Activated CD4-positive, alpha-beta T cell treated with anti-CD3 and anti-CD28 coated beads, Interleukin-2, amount 10 ng/mL, durations not matched to agents 24 days and 14 days (primary cell): ENCODE measurements at regions of chr5 and their contacts with region 1.

Region 1: DNA sequence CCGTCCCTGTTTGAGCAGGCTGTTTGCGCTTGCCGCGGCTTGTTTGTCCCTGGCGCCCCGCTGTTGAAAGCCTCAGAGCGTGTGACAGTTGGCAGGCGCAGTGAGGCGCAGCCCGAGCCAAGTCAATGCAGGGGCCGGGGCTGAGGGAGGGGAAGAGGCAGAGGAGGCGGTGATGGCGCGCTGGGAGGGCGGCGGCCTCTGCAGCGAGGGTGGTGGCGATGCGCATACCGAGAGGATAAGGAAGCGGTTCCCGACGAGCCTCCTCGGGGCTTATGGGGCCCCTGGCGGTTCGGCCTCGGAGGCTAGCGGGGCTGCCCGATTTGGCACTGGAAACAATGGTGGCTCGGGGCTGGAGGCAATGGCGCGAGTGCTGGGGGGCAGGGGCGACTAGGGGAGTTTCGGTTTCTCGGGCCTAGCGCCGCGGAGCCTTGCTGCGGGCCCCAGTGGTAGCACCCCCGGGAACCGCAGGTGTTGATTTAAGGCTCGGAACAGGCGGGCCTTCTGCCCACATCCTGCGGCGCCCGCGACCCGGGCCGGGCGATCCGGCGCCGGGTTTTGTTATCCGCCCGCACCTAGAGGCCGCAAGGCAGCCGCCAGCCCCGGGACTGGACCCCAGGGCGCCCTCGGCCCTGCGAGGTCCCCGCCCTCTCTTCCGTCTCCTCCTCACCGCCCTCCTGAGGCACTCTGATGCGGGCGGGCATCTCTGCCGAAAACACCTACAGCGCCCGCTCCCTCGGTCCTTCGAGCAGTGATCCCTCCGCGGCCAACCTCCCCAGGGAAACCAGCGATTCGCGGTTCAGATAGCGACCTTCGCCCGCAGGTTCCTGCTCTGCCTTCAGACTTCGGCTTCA is 947 bp upstream of the LNPEP start:
- DNase-seq: peak; percentile 99
- H3K4me3 Mint-ChIP-seq: peak overlapping the region; percentile 81
- H3K27ac Mint-ChIP-seq: peak overlapping the region; percentile 94
- H3K4me1 Mint-ChIP-seq: peaks cover 54% of the 10 kb centered on the region
- H3K27me3 Mint-ChIP-seq: no peaks in the 10 kb centered on the region

Region 2: DNA sequence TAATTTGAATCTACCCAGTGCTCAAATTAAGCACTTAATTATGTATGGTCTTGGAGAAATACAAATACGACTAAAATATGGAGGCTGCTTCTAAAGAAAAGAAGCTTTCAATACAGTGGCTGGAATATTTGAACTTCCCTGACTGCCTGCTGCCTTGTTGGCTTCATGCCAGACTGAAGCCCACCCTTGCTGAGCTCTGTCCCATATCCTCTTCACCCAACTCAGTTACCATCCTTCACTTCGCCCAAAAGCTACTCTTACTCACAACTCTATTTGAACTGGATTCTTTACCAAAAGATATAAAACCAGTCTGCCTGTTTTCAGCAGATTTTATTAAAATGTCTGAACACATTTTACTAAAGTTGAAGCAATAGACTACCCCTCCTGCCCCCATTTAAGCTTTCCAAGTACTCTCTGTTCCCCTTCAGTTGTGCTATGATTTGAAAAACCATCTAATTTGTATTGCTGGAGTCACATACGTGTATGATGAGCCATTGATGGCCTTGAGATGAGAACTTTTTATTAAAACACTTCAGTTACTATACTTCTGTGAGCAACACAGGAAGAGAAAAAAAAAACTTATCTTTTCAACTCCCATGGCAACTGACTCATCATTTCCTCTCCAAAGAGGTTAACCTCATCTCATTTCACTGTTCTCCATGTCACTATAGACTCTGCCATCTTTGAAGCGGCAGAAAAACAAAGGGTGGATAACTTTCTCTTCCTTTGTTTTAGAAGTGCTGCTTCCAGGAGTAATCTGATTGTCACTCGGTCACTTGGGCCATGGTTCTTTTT is 397.7 kb before region 1 on chr5:
- intact Hi-C with region 1: loop called (anchors 10 kb)
- DNase-seq: peak; percentile 83
- H3K4me3 Mint-ChIP-seq: peak overlapping the region; percentile 56
- H3K27ac Mint-ChIP-seq: peak overlapping the region; percentile 85
- H3K4me1 Mint-ChIP-seq: peaks cover 27% of the 10 kb centered on the region
- H3K27me3 Mint-ChIP-seq: peaks cover 7% of the 10 kb centered on the region

Region 3: GRCh38 chr5:96868603-96869371 is 66.1 kb before region 1 on chr5:
- intact Hi-C with region 1: loop called (anchors 1 kb)
- DNase-seq: peak; percentile 84
- H3K4me3 Mint-ChIP-seq: no peak overlapping the region
- H3K27ac Mint-ChIP-seq: peak overlapping the region; percentile 13
- H3K4me1 Mint-ChIP-seq: peaks cover 54% of the 10 kb centered on the region
- H3K27me3 Mint-ChIP-seq: no peaks in the 10 kb centered on the region

Region 4: DNA sequence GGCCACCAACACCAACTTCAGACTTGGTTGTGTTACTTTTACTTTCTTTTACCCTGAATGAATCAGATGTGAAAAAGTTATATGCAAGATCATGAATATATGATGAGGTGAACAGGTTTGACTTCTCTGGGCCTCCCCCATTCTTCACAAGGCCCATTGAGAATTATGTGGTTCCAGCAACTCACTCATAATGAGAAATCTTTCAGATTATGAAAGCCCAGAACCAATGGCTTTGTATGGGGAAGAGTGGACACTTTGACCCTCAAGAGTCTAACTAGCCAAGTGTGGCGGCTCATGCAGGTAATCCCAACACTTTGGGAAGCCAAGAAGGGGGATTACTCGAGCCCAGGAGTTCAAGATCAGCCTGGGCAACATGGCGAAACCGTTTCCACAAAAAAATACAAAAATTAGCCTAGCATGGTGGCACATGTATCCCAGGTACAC is 15.2 kb before region 1 on chr5:
- intact Hi-C with region 1: loop called (anchors 1 kb)
- DNase-seq: peak; percentile 56
- H3K4me3 Mint-ChIP-seq: no peak overlapping the region
- H3K27ac Mint-ChIP-seq: peak overlapping the region; percentile 34
- H3K4me1 Mint-ChIP-seq: peaks cover 30% of the 10 kb centered on the region
- H3K27me3 Mint-ChIP-seq: no peaks in the 10 kb centered on the region

Region 5: DNA sequence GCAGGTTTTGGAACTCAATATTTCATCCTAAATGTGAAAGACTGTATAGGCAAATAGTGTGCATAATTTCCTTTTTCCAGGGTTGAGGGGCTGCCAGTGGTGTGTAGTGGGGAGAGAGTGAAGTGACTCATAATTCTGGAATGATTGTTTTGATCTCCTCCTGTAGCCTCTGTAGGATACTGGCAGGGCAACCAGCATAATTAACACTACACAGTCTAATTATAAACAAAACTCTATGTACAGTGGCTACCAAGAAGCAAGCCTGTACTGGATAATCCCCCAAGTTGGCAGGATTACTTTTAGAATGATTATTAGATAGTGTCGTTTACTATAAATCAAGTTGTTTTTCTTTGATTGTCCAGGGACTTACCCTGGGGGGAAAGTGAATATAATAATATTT is 33.1 kb after region 1 on chr5:
- intact Hi-C with region 1: no loop called
- DNase-seq: no peak
- H3K4me3 Mint-ChIP-seq: no peak overlapping the region
- H3K27ac Mint-ChIP-seq: no peak overlapping the region
- H3K4me1 Mint-ChIP-seq: peaks cover 58% of the 10 kb centered on the region
- H3K27me3 Mint-ChIP-seq: no peaks in the 10 kb centered on the region

Region 6: GRCh38 chr5:97009212-97009898 is 74.4 kb after region 1 on chr5:
- intact Hi-C with region 1: loop called (anchors 2 kb)
- DNase-seq: no peak
- H3K4me3 Mint-ChIP-seq: no peak overlapping the region
- H3K27ac Mint-ChIP-seq: peak overlapping the region; percentile 14
- H3K4me1 Mint-ChIP-seq: peaks cover 13% of the 10 kb centered on the region
- H3K27me3 Mint-ChIP-seq: no peaks in the 10 kb centered on the region

Region 7: GRCh38 chr5:97183100-97183929 is 248.4 kb after region 1 on chr5 and contains the start of gene RIOK2:
- intact Hi-C with region 1: loop called (anchors 1 kb)
- DNase-seq: peak; percentile 97
- H3K4me3 Mint-ChIP-seq: peak within 1 kb of the TSS; percentile 89
- H3K27ac Mint-ChIP-seq: peak within 1 kb of the TSS; percentile 100
- H3K4me1 Mint-ChIP-seq: peaks cover 24% of the 10 kb centered on the region
- H3K27me3 Mint-ChIP-seq: peaks cover 4% of the 10 kb centered on the region
- total RNA-seq, gene RIOK2: 40.8 and 42.0 TPM in 2 replicates

Region 8: GRCh38 chr5:98928873-98929696 is 1994.2 kb after region 1 on chr5 and contains the start of gene CHD1:
- intact Hi-C with region 1: no loop called
- DNase-seq: peak; percentile 98
- H3K4me3 Mint-ChIP-seq: peak within 1 kb of the TSS; percentile 95
- H3K27ac Mint-ChIP-seq: peak within 1 kb of the TSS; percentile 99
- H3K4me1 Mint-ChIP-seq: peaks cover 40% of the 10 kb centered on the region
- H3K27me3 Mint-ChIP-seq: peaks cover 5% of the 10 kb centered on the region
- total RNA-seq, gene CHD1: 74.2 and 80.6 TPM in 2 replicates